ENCODE measurements at regions of chr1 and their contacts with region 1.

Region 1: DNA sequence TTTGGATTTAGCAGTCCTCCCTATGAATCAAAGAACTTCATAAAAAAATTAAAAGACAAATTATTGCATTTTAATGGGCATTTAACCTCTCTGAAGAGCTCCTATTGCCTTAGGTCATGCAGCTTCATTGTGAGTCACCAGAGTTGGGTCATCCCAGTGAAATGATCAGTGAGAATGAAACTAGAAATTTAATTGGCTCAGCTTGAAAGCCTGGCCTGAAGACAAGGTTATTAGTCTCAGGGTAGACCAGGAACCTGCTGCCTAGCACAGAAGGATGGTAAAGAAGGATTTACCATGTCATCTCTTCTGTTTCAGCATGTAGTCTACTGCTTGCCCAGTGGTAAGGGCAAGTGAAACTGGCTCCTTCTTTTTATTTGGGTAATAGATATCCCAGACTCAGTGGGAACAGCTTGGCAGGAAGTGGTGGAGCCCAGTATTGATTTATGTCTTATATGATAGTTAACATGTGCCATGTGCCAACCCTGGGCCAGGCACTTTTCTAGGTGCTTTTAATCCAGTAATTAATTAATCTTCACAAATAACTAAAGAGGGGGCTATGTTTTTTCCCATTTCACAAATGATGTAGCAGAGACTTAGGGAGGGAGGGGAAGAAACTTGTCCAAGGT is 23.6 kb downstream of the LAMC2 start:
- DNase-seq: peak; percentile 62
- CTCF ChIP-seq: no peak

Region 2: DNA sequence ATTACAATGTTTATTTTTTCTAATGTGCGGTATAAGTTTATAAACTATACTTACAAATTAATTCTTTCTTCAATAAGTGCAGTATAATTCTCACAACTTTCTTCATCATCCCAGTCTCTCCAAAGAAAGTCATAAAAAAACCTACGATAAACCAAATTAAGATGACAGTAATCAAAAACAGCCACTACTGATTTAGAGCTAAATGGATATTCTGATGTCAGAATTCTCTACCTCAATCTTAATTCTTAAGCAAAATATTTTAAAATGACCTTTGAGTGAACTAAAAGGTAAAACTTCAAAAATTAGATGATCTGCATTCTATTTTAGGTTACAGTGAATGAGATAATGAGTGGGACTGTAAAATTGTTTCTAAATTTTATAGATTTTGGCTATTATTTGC is 270.2 kb before region 1 on chr1:
- in situ Hi-C with region 1: no loop called
- DNase-seq: no peak
- CTCF ChIP-seq: no peak

Region 3: DNA sequence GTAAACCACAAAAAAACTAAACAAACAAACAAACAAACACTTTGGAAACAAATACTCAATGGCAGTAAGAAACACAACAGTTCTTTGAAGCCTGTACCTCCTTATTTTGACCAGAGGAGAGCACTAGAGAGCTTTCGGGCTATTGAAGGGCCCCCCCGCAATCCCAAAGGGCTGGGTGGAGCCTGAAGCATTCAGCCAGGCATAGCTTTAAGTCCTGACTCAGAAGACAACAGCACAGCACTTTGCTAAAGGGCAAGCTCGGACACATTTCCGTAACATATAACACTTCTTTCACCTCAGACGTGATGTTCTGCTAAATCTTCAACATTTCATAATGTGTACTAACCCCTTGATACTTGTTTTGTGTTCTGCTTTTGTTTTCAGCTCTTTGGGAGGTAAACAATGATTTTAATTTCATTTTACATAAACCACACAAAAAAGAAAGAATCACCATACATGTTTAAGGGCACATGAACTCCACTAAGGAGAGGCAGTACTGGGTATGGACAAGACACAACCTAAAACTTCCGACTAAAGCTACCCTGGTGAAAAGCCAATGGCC is 247.0 kb before region 1 on chr1:
- in situ Hi-C with region 1: loop called (anchors 25 kb)
- DNase-seq: peak; percentile 87
- CTCF ChIP-seq: peak; percentile 75

Region 4: GRCh38 chr1:183676586-183677189 is 467.0 kb after region 1 on chr1:
- in situ Hi-C with region 1: no loop called
- DNase-seq: no peak
- CTCF ChIP-seq: no peak

Measured in GM13977 (cell line).